ENCODE measurements at regions of chr17 and their contacts with region 1.

Region 1: GRCh38 chr17:5699814-5700213 is 115.5 kb upstream of the NLRP1 start:
- DNase-seq: no peak
- H3K4me3 ChIP-seq: no peak overlapping the region
- CTCF ChIP-seq: no peak

Region 2: DNA sequence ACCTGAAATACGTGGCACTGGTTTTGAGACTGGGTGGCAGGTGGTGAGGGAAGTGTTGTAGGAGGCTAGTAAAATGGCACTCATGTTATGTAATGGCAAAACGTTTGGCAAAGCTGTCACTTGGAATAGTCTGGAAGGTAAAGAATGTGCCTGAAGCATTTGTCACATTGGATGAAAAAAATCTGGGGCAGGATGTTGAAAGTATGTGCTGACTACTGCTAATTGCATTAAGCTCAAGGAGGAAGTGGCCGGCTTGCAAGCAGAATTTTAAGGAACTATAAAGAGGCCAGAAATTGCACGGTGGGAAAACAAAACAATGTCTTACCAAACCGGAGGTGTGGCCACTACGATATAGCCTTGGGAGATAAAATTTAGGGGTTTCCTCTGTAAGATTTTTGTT is 88.9 kb before region 1 on chr17:
- in situ Hi-C with region 1: loop called (anchors 5 kb)
- DNase-seq: no peak
- H3K4me3 ChIP-seq: no peak overlapping the region
- CTCF ChIP-seq: no peak

Region 3: GRCh38 chr17:5644065-5644464 is 55.7 kb before region 1 on chr17:
- in situ Hi-C with region 1: loop called (anchors 5 kb)
- DNase-seq: no peak
- H3K4me3 ChIP-seq: no peak overlapping the region
- CTCF ChIP-seq: no peak